OCI-LY7 (cell line): ENCODE measurements at regions of chr19 and their contacts with region 1.

Region 1: GRCh38 chr19:4815426-4816201 is 15.9 kb downstream of the TICAM1 start:
- DNase-seq: peak; percentile 91
- H3K4me3 ChIP-seq: no peak overlapping the region
- H3K27ac ChIP-seq: no peak overlapping the region
- H3K4me1 ChIP-seq: peaks cover 24% of the 10 kb centered on the region
- CTCF ChIP-seq: no peak

Region 2: DNA sequence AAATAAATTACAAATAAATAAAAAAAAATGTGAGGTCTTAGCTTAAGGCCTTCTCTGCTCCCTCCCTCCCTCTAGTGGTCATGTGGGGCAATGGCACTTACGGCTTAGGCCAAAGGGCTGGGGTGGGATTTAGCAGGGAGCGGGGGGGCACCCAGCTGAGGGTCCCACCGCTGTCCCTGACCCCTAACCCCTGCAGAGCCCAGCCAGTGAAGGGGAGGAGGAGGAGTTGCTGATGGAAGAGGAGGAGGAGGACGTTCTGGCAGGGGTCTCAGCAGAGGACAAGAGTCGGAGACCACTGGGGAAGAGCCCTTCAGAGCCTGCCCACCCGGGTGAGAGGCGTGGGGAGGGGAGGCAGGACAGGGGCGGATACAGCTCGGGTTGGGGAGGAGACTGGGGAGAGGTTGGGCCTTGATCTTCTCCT is 462.9 kb before region 1 on chr19:
- CTCF ChIA-PET with region 1: no interaction called
- POLR2A ChIA-PET with region 1: no interaction called
- intact Hi-C with region 1: no loop called
- DNase-seq: peak; percentile 65
- H3K4me3 ChIP-seq: no peak overlapping the region
- H3K27ac ChIP-seq: no peak overlapping the region
- H3K4me1 ChIP-seq: no peaks in the 10 kb centered on the region
- CTCF ChIP-seq: peak; percentile 84

Region 3: GRCh38 chr19:4831304-4831978 is 15.8 kb after region 1 on chr19 and contains the start of gene TICAM1:
- CTCF ChIA-PET with region 1: no interaction called
- POLR2A ChIA-PET with region 1: interaction called, 3 read pairs
- intact Hi-C with region 1: loop called (anchors 1 kb)
- DNase-seq: peak; percentile 70
- H3K4me3 ChIP-seq: peak within 1 kb of the TSS; percentile 76
- H3K27ac ChIP-seq: peak within 1 kb of the TSS; percentile 77
- H3K4me1 ChIP-seq: peaks cover 46% of the 10 kb centered on the region
- CTCF ChIP-seq: 0 out of 2 replicates have a peak, but pooled peaks have one; percentile 28
- total RNA-seq, gene TICAM1: 4.9 and 6.8 TPM in 2 replicates

Region 4: GRCh38 chr19:4851551-4852290 is 36.1 kb after region 1 on chr19:
- CTCF ChIA-PET with region 1: interaction called, 28 read pairs
- POLR2A ChIA-PET with region 1: interaction called, 15 read pairs
- intact Hi-C with region 1: no loop called
- DNase-seq: peak; percentile 77
- H3K4me3 ChIP-seq: no peak overlapping the region
- H3K27ac ChIP-seq: peak overlapping the region; percentile 91
- H3K4me1 ChIP-seq: peaks cover 43% of the 10 kb centered on the region
- CTCF ChIP-seq: peak; percentile 92

Region 5: DNA sequence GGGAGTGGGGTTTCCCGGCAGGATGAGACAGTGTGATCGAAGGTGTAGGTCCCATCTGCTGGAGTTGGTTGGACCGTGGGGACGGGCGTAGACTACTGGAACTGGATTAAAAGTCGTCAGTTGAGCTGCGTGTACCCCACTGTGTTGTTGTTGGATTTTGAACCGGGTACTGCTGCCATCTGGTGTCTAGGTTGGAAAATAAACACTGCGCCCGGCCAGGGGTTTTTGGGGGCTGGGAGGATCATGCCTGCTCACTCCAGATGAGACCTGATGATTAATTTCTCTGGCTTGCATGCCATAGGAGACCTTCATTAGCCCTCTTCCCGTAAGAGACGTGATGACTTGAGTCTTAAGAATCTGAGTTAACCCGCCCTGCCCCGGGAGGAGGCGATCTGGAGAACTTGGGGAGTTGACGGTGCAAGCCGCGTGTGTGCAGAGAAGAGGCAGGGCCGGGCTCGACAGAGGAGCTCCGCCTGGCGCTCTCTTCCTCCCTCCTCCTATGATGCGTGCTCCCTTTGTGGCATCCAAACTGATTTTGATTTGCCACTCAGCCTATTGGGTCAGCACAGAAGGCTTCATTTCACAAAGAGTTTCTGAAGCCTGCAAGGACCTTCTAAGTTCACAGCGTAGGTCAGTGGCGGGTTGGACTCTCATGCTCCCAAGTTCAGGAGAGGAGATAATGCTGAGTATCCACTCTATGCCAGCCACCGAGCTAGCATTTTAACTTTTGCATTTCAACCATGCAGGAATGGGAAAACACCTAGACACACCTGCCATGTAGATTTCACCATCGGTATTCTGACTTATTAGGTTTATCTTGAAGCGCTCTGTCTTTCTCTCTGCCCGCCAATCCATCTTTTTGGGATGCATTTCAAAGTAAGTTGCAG is 96.4 kb after region 1 on chr19:
- CTCF ChIA-PET with region 1: interaction called, 14 read pairs
- POLR2A ChIA-PET with region 1: no interaction called
- intact Hi-C with region 1: no loop called
- DNase-seq: peak; percentile 75
- H3K4me3 ChIP-seq: peak overlapping the region; percentile 97
- H3K27ac ChIP-seq: peak overlapping the region; percentile 80
- H3K4me1 ChIP-seq: peaks cover 29% of the 10 kb centered on the region
- CTCF ChIP-seq: peak; percentile 84